CD4-positive, alpha-beta memory T cell (primary cell): ENCODE measurements at regions of chr12 and their contacts with region 1.

Region 1: GRCh38 chr12:132710422-132711168 is at the start of gene PGAM5:
- DNase-seq: peak; percentile 95 to 97 (median 96)
- H3K4me3 ChIP-seq: peak within 1 kb of the TSS; percentile 48 to 70
- H3K4me3 Mint-ChIP-seq: peak within 1 kb of the TSS; percentile 88 to 90 (median 90)
- H3K27ac ChIP-seq: peak within 1 kb of the TSS; percentile 91
- H3K27ac Mint-ChIP-seq: peak within 1 kb of the TSS; percentile 92 to 95 (median 94)
- H3K4me1 ChIP-seq: peaks cover 28% of the 10 kb centered on the region
- H3K4me1 Mint-ChIP-seq: peaks cover 8 to 33% (median 19%) of the 10 kb centered on the region in 4 donors
- H3K27me3 ChIP-seq: no peaks in the 10 kb centered on the region
- H3K27me3 Mint-ChIP-seq: no peaks in the 10 kb centered on the region
- total RNA-seq, gene PGAM5: 23.8 to 28.1 TPM

Region 2: GRCh38 chr12:132687208-132688164 is 23.1 kb before region 1 on chr12 and contains the starts of genes POLE and PXMP2:
- CTCF ChIA-PET with region 1: no interaction called
- POLR2A ChIA-PET with region 1: interaction called, 4 read pairs
- intact Hi-C with region 1: loop called (anchors 1 kb)
- DNase-seq: peak; percentile 91 to 93 (median 91)
- H3K4me3 ChIP-seq: peak within 1 kb of the TSS in 1 of 2 donors; percentile 45
- H3K4me3 Mint-ChIP-seq: peak within 1 kb of the TSS; percentile 78 to 90 (median 86)
- H3K27ac ChIP-seq: peak within 1 kb of the TSS; percentile 26
- H3K27ac Mint-ChIP-seq: peak within 1 kb of the TSS in 4 of 7 donors; percentile 47 to 74 (median 62)
- H3K4me1 ChIP-seq: peaks cover 13% of the 10 kb centered on the region
- H3K4me1 Mint-ChIP-seq: peaks cover 15 to 36% (median 20%) of the 10 kb centered on the region in 4 donors
- H3K27me3 ChIP-seq: no peaks in the 10 kb centered on the region
- H3K27me3 Mint-ChIP-seq: no peaks in the 10 kb centered on the region
- total RNA-seq, gene POLE: 69.5 to 75.4 TPM
- total RNA-seq, gene PXMP2: 4.2 to 7.2 TPM

Region 3: DNA sequence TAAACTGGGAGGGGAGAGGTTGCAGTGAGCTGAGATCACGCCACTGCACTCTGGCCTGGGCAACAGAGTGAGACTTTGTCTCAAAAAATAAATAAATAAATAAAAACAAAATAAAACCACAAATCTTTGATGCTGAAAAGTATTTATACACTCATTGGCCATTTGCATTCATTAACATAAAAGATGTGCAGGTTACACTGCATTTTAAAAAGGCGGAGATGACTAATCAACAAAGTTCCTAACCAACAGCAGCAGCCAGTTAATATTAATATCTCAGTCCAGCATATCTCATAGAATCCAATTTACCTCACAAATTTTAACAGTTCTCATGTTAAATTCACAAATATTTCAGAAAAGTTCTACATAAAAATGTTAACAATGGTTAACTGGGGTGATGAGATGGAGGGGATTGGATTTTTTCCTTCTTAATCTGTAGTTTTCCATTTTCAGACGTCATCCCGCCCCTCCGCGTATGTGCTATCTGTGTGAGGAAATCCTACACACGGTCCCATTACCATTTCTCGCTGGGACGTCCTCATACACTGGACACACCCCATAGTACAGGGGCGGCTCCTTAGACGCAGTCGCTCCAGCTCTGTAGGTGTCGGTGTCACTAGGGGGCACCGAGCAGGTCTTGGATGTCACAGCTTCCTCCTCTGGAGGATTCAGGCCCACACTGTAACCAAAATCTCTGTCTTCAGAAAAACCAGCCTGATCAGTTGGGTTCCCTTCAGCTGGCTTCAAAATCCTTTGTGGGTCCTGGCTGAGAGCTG is 43.8 kb after region 1 on chr12:
- CTCF ChIA-PET with region 1: no interaction called
- POLR2A ChIA-PET with region 1: no interaction called
- intact Hi-C with region 1: no loop called
- DNase-seq: no peak
- H3K4me3 ChIP-seq: no peak overlapping the region
- H3K4me3 Mint-ChIP-seq: no peak overlapping the region
- H3K27ac ChIP-seq: no peak overlapping the region
- H3K27ac Mint-ChIP-seq: no peak overlapping the region
- H3K4me1 ChIP-seq: no peaks in the 10 kb centered on the region
- H3K4me1 Mint-ChIP-seq: peaks cover 3 to 9% (median 6%) of the 10 kb centered on the region in 4 donors
- H3K27me3 ChIP-seq: no peaks in the 10 kb centered on the region
- H3K27me3 Mint-ChIP-seq: no peaks in the 10 kb centered on the region